ENCODE measurements at regions of chr7 and their contacts with region 1.

Region 1: DNA sequence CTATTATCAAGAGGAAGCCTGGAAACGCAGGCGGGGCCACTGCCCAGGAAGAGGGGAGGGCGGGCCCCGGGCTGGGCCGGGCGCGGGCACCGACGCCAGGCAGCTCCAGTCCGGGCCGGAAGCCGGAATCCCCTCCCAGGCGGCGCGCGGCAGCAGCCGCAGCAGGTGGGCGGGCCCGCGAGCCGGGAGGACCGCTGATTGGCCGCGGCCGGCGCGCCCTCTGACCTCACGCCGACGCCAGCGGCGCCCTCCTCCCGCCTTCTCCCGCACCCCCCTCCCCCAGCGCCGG is 438 bp downstream of the BCL7B start:
- DNase-seq: peak; percentile 91
- H3K4me3 Mint-ChIP-seq: peak overlapping the region; percentile 75
- H3K27ac Mint-ChIP-seq: peak overlapping the region; percentile 95
- H3K4me1 Mint-ChIP-seq: peaks cover 31% of the 10 kb centered on the region
- H3K27me3 Mint-ChIP-seq: no peaks in the 10 kb centered on the region
- CTCF ChIP-seq: no peak

Region 2: DNA sequence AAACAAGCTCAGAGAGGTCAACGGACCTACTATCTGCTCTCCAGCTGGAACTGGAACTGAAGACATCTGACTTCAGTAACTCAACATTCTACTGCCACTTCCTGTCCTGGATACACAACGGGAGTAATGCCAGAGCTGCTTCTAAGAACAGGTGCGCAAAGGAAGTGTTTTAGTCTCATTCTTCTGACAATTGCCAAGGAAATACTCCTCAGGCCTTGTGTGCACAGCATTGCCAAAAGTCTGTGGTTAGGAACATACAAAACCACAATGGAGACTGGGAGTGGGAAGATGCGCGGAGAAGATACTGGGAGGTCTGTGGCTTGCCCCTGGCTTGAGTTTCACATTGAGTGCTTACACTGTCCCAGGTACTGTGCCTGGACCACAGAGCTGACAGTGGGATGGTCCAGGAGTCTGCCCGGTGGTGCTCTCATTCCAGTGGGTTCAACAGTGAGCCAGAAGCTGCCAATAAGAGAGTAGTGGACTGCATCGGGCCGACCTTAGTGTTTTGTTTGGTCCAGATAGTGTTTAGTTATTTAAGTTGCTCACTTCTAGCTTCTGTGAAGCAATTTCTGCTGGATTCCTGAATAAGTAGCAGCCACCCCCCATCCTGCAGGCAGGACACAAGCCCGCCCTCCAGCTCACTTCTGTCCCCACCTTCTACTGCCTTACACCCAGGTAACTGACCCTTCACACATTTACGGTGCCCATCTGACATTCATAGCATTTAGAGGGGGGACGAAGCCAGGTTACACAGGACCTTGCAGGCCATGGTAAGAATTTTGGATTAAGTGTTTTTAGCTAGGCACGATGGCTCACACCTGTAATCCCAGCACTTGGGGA is 11.0 kb after region 1 on chr7:
- CTCF ChIA-PET with region 1: interaction called, 5 read pairs
- POLR2A ChIA-PET with region 1: interaction called, 11 read pairs
- intact Hi-C with region 1: no loop called
- DNase-seq: peak; percentile 42
- H3K4me3 Mint-ChIP-seq: no peak overlapping the region
- H3K27ac Mint-ChIP-seq: no peak overlapping the region
- H3K4me1 Mint-ChIP-seq: peaks cover 8% of the 10 kb centered on the region
- H3K27me3 Mint-ChIP-seq: no peaks in the 10 kb centered on the region
- CTCF ChIP-seq: no peak

Region 3: DNA sequence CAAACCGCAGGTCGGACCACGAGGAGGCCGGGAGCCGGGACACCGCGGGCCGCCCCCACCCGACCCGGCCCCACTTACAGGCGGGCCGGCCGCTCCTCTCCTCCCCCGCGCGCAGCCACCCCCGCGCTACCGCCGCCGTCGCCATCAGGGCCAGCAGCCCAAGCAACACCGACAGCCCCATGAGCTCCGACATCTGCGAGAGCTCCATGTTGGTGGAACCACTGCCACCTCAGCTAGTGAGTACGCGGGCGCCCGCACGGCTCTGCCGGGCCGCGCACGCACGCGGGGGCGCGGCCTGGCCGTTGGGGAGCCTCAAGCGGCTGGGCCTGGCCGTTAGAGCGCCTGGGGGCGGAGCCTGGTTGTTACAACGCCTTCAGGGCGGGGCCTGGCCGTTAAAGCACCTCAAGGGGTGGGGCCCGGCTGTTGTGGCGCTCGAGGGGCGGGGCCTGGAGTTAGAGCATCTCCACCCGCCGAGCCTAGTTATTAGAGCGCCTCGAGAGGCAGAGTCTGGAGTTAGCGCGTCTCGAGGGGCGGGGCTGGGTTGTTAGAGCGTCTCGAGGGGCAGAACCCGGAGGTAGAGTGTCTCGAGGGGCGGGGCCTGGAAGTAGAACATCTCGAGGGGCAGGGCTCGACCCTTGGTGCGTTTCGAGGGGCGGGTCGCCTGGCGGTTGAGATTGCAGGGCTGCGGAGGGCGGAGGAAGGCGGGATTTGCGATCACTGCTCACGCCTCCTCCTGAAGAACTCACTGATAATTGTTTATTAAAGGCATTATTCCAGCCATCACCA is 21.5 kb after region 1 on chr7 and contains the start of gene TBL2:
- CTCF ChIA-PET with region 1: interaction called, 3 read pairs
- POLR2A ChIA-PET with region 1: interaction called, 22 read pairs
- intact Hi-C with region 1: no loop called
- DNase-seq: peak; percentile 98
- H3K4me3 Mint-ChIP-seq: peak within 1 kb of the TSS; percentile 87
- H3K27ac Mint-ChIP-seq: peak within 1 kb of the TSS; percentile 93
- H3K4me1 Mint-ChIP-seq: peaks cover 5% of the 10 kb centered on the region
- H3K27me3 Mint-ChIP-seq: no peaks in the 10 kb centered on the region
- CTCF ChIP-seq: no peak
- total RNA-seq, gene TBL2: 44.0 and 47.0 TPM in 2 replicates